ENCODE measurements at regions of chr21 and their contacts with region 1.

Region 1: DNA sequence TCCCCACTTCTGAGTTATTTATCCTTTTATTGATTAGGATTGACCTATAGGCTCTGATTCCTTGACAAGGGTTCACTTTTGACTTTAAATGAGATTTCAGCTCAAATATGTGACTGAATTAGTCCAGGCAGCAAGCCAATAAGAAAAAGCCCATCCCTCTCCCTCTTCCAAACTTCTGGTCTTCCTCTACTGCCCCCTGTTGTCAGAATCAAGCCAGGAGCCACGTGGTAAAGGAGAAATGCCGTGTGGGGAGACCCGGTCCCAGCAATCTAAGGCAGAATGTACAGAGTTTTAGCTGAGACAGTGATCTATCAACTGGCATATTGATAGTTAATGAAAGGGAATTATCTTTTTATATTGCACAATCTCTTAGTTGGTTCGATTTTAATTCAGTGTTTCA is 5.2 kb downstream of the ADAMTS5 start:
- H3K4me3 Mint-ChIP-seq: no peak overlapping the region
- H3K27ac Mint-ChIP-seq: no peak overlapping the region
- H3K4me1 Mint-ChIP-seq: peaks cover 32% of the 10 kb centered on the region
- H3K27me3 Mint-ChIP-seq: peaks cover 35% of the 10 kb centered on the region

Region 2: GRCh38 chr21:26881504-26882228 is 80.0 kb before region 1 on chr21:
- intact Hi-C with region 1: loop called (anchors 1 kb)
- H3K4me3 Mint-ChIP-seq: no peak overlapping the region
- H3K27ac Mint-ChIP-seq: no peak overlapping the region
- H3K4me1 Mint-ChIP-seq: no peaks in the 10 kb centered on the region
- H3K27me3 Mint-ChIP-seq: peaks cover 21% of the 10 kb centered on the region

Measured in dendritic cell treated with granulocyte-macrophage colony-stimulating factor and Interleukin-4, amounts not matched to agents 40 ng/mL and 50 ng/mL, for 4 days (primary cell).